WTC11 (cell line): ENCODE measurements at regions of chr16 and their contacts with region 1.

Region 1: DNA sequence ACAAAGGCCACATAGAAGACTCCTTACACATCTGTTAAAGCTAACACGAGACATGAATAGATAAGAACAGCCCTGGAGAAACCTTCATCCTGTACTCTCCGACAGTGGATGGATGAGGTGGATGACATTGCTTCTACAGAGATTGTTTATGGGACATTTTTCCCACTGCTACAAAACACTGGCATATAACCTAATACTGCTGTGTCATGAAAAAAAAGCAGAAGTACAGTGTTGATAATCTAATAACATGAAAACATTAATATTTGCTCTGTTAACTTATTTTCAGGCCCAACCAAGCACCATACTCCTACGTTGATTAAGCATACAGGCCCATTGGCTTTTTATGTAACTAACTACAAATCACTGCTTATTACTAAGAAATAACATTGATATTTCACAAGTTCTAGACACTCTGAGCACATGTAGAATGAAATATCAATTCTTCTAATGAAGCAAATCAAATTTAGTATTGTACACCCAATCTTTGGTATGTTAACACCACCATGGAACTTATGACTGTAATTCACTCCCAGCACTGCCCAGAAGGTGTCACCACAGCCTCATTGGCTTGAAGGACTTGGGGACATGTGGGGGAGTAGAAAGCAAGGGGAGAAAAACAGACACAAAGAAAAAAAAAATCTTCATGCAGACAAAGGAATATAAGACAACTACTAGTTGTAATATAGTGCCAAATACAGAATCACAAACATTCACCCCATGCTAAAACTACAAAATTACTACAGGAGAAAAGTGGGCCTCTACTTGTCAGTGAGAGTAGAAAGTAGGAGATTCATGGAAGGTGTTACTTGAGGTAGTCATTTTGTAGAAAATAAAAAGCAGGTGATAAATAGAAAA is 330.0 kb upstream of the PMFBP1 start:
- DNase-seq: peak; percentile 67
- ATAC-seq: peak; percentile 87
- H3K4me3 Mint-ChIP-seq: no peak overlapping the region
- H3K27ac Mint-ChIP-seq: no peak overlapping the region
- H3K4me1 Mint-ChIP-seq: peaks cover 4% of the 10 kb centered on the region
- H3K27me3 Mint-ChIP-seq: no peaks in the 10 kb centered on the region
- CTCF ChIP-seq: peak; percentile 47

Region 2: GRCh38 chr16:72847187-72848027 is 345.4 kb after region 1 on chr16:
- CTCF ChIA-PET with region 1: interaction called, 13 read pairs
- POLR2A ChIA-PET with region 1: no interaction called
- DNase-seq: peak; percentile 55
- ATAC-seq: peak; percentile 89
- H3K4me3 Mint-ChIP-seq: no peak overlapping the region
- H3K27ac Mint-ChIP-seq: no peak overlapping the region
- H3K4me1 Mint-ChIP-seq: peaks cover 37% of the 10 kb centered on the region
- H3K27me3 Mint-ChIP-seq: no peaks in the 10 kb centered on the region; the same call in 1 of the 2 replicates
- CTCF ChIP-seq: peak; percentile 42; the same call in 1 of the 2 replicates

Region 3: DNA sequence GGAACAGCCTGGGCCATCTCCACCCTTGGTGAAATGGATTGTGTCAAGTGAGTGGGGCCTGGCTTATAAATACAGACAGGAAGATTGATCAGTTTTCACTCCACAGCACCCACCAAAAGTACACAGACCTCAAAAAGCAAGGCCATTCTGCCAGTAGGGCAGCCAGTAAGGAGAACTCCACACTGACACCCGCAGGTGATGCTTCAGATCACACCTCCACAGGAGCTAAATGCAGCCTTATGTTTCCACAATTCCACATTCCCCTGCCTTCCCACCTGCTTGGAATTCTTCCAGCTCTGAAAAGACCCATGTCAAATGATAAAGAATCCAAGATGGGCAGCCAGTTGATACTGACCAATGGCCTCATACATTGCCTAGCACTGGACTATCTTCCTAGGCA is 354.8 kb after region 1 on chr16:
- CTCF ChIA-PET with region 1: interaction called, 10 read pairs
- POLR2A ChIA-PET with region 1: no interaction called
- DNase-seq: peak; percentile 58
- ATAC-seq: peak; percentile 84
- H3K4me3 Mint-ChIP-seq: no peak overlapping the region
- H3K27ac Mint-ChIP-seq: no peak overlapping the region
- H3K4me1 Mint-ChIP-seq: peaks cover 30% of the 10 kb centered on the region
- H3K27me3 Mint-ChIP-seq: no peaks in the 10 kb centered on the region
- CTCF ChIP-seq: no peak